H1 (cell line): ENCODE measurements at regions of chr10 and their contacts with region 1.

Region 1: GRCh38 chr10:102660888-102661657 is 16.8 kb downstream of the TRIM8 start:
- DNase-seq: peak in 1 of 2 experiments; percentile 62
- H3K4me3 ChIP-seq: peak overlapping the region in 1 of 4 experiments; percentile 16; a peak in 1 of 8 replicates
- H3K27ac ChIP-seq: no peak overlapping the region
- H3K4me1 ChIP-seq: peaks cover 0 to 12% (median 7%) of the 10 kb centered on the region in 4 experiments; a peak in 5 of 7 replicates
- H3K27me3 ChIP-seq: no peaks in the 10 kb centered on the region
- CTCF ChIP-seq: no peak
- EP300 ChIP-seq: no peak
- POLR2A ChIP-seq: no peak
- RAD21 ChIP-seq: no peak

Region 2: DNA sequence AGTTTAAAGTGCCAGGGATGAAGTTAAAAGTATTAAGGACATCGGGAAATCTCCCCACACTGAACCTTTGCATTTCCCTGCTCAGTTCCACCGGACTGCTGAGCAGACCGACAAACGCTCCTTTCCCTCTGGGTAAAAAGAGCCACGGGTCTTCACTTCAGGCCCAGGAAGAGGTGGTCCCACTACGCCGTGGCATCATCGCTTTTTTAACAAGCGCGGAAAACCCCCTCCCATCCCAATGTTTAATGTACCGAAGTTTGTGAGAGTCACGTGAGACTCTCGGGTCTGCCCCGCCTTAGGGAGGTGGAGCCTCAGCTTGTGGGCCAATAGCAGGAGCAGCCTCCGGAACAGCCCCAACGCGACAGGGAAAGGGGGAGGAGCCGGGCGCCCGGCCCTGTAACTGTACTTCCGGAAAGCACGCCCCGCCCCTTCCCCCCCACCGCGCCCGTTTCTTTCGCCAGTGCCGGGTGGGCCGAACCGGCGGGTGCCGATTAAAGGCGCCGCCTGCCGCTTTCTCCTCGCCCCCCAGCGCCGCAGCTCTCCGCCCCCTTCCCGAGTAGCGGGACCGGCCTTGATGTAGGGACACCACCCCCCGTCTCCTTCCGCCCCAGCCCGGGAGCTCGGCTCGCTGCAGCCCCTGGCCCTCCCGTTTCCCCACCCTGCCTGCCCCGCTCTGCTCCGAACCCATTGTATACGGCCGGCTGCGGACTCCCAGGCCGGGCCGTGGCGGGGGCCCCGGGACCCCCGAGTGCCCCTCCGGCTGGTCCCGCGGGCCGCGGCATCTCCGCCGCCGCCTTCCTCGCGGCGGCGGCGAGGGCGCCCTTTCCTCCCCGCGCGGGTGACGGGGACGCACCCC is 19.0 kb before region 1 on chr10:
- CTCF ChIA-PET with region 1: interaction called, 7 read pairs
- POLR2A ChIA-PET with region 1: interaction called, 27 read pairs
- DNase-seq: peak; percentile 94
- H3K4me3 ChIP-seq: peak overlapping the region; percentile 40 to 81 (median 63)
- H3K27ac ChIP-seq: peak overlapping the region; percentile 80; the same call in 1 of the 2 replicates
- H3K4me1 ChIP-seq: peaks cover 6 to 16% (median 13%) of the 10 kb centered on the region in 4 experiments
- H3K27me3 ChIP-seq: no peaks in the 10 kb centered on the region
- CTCF ChIP-seq: no peak
- EP300 ChIP-seq: no peak
- POLR2A ChIP-seq: peak in 1 of 2 experiments; percentile 77; a peak in 2 of 3 replicates
- RAD21 ChIP-seq: no peak

Region 3: DNA sequence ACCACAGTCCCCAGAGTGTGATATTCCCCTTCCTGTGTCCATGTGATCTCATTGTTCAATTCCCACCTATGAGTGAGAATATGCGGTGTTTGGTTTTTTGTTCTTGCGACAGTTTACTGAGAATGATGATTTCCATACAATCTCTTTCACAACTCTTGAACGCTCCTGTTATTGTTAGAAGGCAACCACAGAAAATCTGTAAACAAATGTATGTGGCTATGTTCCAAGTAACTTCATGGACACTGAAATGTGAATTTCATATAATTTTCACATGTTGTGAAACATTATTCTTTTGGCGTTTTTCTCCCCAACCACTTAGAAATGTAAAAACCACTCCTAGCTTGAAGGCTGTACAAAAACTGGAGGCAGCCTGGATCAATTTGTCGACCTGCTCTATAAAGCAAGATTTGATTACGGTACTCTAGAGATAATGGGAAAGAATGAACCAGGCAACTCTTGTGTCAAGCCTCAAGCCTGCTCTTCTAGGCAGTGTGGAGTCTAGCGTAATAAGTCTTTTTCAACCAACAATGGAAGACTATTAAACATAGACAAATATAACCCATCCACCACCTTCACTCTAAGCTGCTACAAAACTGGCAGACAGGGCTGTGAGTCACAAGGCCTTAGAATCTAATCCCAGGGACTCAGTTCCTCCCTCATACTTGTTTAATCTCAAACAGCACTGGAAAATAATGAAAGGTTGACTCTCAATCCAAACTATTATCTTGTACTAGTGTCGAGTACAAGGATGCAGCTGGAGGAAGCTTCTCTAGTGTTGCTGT is 30.4 kb after region 1 on chr10:
- CTCF ChIA-PET with region 1: no interaction called
- POLR2A ChIA-PET with region 1: no interaction called
- DNase-seq: no peak
- H3K4me3 ChIP-seq: no peak overlapping the region
- H3K27ac ChIP-seq: no peak overlapping the region
- H3K4me1 ChIP-seq: no peaks in the 10 kb centered on the region
- H3K27me3 ChIP-seq: no peaks in the 10 kb centered on the region
- CTCF ChIP-seq: no peak
- EP300 ChIP-seq: no peak
- POLR2A ChIP-seq: no peak
- RAD21 ChIP-seq: no peak